ENCODE measurements at regions of chr1 and their contacts with region 1.

Region 1: DNA sequence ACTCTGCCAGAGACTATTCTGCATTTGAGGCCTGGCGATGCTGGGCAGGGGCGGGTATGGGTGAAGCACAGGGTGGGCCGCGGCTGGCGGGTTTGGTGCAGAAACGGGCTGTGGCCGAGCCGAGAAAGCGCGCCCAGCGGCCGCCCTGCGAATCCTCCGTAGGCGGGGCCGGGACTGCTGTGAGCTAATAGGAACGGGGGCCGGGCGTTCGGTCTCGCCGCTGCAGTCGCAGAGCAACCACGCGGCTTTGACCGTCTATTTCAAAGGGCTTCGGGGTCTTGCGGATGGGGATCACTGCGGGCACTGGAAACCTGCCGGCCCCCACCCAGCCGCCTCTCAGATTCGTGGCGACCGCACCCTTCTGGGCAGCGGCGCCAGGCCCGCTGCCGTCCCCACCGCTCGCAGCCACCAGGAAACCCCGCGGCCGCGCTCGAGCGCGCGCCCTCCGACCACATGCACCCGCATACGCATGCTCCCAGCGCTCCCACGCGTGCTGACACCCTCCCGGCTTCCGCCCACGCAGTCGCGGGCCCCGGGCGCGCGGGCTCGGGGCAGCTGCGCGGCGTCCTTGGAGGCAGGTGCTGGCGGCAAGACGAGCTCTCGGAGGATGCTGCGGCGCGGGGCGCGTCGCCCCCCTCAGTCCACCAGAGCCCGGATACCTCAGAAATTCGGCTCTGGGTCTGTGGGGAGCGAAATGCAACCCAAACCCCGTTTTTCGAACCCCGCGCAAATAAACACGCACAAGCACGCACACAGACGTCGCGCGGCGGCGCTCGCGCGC is 32.6 kb downstream of the DNTTIP2 start:
- DNase-seq: peak; percentile 79
- H3K4me3 Mint-ChIP-seq: peak overlapping the region; percentile 95
- H3K27ac Mint-ChIP-seq: peak overlapping the region; percentile 94
- H3K4me1 Mint-ChIP-seq: peaks cover 30% of the 10 kb centered on the region
- H3K27me3 Mint-ChIP-seq: peaks cover 2% of the 10 kb centered on the region

Region 2: DNA sequence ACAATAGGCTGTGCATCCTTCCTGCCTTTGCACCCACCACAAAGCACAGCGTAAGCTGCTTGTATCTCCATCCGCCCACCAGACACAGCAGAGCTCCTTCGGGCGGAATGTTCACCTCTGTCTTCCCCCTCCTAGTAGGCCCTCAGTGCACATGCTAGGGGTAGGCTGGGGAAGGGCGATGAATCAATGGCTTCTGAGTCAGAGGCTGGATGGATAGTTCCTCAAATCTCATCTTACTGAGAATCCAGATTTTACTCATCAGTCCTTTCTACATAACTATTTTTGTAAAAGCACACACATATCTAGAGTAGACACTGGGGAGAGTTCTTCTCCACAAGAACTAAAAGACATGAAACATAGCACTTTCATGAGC is 238.6 kb before region 1 on chr1:
- CTCF ChIA-PET with region 1: interaction called, 11 read pairs
- POLR2A ChIA-PET with region 1: no interaction called
- DNase-seq: no peak
- H3K4me3 Mint-ChIP-seq: no peak overlapping the region
- H3K27ac Mint-ChIP-seq: no peak overlapping the region
- H3K4me1 Mint-ChIP-seq: peaks cover 17% of the 10 kb centered on the region
- H3K27me3 Mint-ChIP-seq: peaks cover 5% of the 10 kb centered on the region

Region 3: GRCh38 chr1:93629099-93630059 is 217.0 kb before region 1 on chr1:
- CTCF ChIA-PET with region 1: interaction called, 22 read pairs
- POLR2A ChIA-PET with region 1: no interaction called
- DNase-seq: peak; percentile 63
- H3K4me3 Mint-ChIP-seq: no peak overlapping the region
- H3K27ac Mint-ChIP-seq: no peak overlapping the region
- H3K4me1 Mint-ChIP-seq: no peaks in the 10 kb centered on the region
- H3K27me3 Mint-ChIP-seq: no peaks in the 10 kb centered on the region

Region 4: GRCh38 chr1:93814059-93814794 is 32.2 kb before region 1 on chr1:
- CTCF ChIA-PET with region 1: interaction called, 16 read pairs
- POLR2A ChIA-PET with region 1: interaction called, 3 read pairs
- DNase-seq: peak; percentile 72
- H3K4me3 Mint-ChIP-seq: no peak overlapping the region
- H3K27ac Mint-ChIP-seq: no peak overlapping the region
- H3K4me1 Mint-ChIP-seq: peaks cover 22% of the 10 kb centered on the region
- H3K27me3 Mint-ChIP-seq: no peaks in the 10 kb centered on the region

Region 5: DNA sequence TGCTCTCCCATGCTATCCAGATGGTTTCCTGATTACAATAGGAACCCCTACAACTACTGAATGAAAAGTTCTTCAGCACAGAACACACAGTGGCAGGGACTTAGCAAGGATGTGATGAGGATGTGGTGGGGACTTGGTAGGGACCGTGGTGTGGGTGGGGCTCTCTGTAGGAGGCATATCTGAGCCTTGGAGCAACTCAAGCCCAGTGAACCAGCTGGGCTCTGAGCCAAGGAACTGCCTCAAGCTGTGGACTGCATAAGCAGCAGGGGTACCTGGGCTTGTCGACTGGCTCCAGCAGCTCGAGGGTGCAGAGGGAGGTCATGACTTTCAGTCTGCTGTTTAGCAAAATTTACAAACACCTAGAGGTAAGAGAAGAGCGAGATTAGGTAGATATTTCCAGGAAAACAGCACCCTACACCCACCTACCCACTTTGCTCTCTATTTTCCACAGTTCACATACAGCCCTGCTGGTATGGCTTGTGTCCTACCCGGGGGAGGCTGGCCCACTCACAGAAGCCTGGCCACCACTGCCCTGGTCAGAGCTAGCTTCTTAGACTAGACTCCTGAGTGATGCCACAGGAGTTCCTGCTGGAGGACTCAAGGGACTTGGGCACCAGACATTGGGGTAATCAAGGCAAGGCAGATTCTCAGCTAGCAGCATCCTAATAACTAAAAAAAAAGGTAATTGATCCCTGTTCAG is 149.6 kb after region 1 on chr1:
- CTCF ChIA-PET with region 1: no interaction called
- POLR2A ChIA-PET with region 1: no interaction called
- DNase-seq: no peak
- H3K4me3 Mint-ChIP-seq: no peak overlapping the region
- H3K27ac Mint-ChIP-seq: no peak overlapping the region
- H3K4me1 Mint-ChIP-seq: no peaks in the 10 kb centered on the region
- H3K27me3 Mint-ChIP-seq: peaks cover 37% of the 10 kb centered on the region